ENCODE measurements at regions of chr1 and their contacts with region 1.

Region 1: GRCh38 chr1:14713086-14713485 is 114.6 kb downstream of the KAZN start:
- DNase-seq: no peak
- ATAC-seq: no peak
- H3K4me3 ChIP-seq: no peak overlapping the region
- H3K27ac ChIP-seq: no peak overlapping the region
- H3K4me1 ChIP-seq: no peaks in the 10 kb centered on the region
- H3K27me3 ChIP-seq: no peaks in the 10 kb centered on the region; the same call in 1 of the 2 replicates
- CTCF ChIP-seq: no peak

Region 2: GRCh38 chr1:14568716-14569355 is 144.2 kb before region 1 on chr1:
- CTCF ChIA-PET with region 1: no interaction called
- POLR2A ChIA-PET with region 1: interaction called, 10 read pairs
- in situ Hi-C with region 1: no loop called
- intact Hi-C with region 1: no loop called
- DNase-seq: no peak
- ATAC-seq: no peak
- H3K4me3 ChIP-seq: no peak overlapping the region
- H3K27ac ChIP-seq: no peak overlapping the region
- H3K4me1 ChIP-seq: no peaks in the 10 kb centered on the region
- H3K27me3 ChIP-seq: no peaks in the 10 kb centered on the region
- CTCF ChIP-seq: no peak

Region 3: GRCh38 chr1:14699620-14700019 is 13.5 kb before region 1 on chr1:
- CTCF ChIA-PET with region 1: no interaction called
- POLR2A ChIA-PET with region 1: no interaction called
- in situ Hi-C with region 1: no loop called
- intact Hi-C with region 1: no loop called
- DNase-seq: no peak
- ATAC-seq: no peak
- H3K4me3 ChIP-seq: no peak overlapping the region
- H3K27ac ChIP-seq: no peak overlapping the region
- H3K4me1 ChIP-seq: no peaks in the 10 kb centered on the region
- H3K27me3 ChIP-seq: peaks cover 8% of the 10 kb centered on the region
- CTCF ChIP-seq: no peak

Measured in Panc1 (cell line).